Endothelial cell of umbilical vein (primary cell): ENCODE measurements at regions of chr5 and their contacts with region 1.

Region 1: DNA sequence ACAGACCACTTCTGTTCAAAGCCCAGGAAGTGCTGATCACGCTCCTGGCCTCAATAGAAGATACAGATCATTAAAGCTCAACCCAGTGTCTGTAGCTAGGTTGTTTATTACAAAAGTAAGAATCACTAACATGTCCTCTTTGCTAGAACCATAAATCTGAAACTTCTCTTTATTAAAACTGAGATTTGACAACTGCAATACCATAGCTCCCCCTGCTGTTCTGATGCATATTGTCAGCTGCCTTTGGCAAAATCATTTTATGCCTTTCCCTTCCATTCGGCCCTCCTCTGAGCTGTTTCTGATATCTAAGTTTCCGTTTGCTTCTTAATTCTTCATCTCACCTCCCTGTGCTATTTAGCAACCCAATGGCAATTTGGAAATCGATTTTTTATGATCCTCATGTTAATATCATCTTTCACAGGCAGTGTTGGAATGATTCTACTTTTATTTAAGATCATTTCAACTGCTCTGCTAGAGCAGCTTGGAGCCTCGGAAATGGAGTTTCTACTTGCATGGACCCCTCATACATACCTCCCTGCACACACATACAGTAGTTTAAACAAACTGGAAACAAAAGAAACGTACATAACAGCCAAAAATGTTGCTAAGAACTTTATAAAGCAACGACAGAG is 998.8 kb downstream of the MAT2B start:
- DNase-seq: peak; percentile 71
- H3K4me3 ChIP-seq: no peak overlapping the region
- H3K27ac ChIP-seq: no peak overlapping the region
- H3K4me1 ChIP-seq: peaks cover 2% of the 10 kb centered on the region
- H3K27me3 ChIP-seq: no peaks in the 10 kb centered on the region
- CTCF ChIP-seq: peak; percentile 65 to 68
- POLR2A ChIP-seq: no peak

Region 2: DNA sequence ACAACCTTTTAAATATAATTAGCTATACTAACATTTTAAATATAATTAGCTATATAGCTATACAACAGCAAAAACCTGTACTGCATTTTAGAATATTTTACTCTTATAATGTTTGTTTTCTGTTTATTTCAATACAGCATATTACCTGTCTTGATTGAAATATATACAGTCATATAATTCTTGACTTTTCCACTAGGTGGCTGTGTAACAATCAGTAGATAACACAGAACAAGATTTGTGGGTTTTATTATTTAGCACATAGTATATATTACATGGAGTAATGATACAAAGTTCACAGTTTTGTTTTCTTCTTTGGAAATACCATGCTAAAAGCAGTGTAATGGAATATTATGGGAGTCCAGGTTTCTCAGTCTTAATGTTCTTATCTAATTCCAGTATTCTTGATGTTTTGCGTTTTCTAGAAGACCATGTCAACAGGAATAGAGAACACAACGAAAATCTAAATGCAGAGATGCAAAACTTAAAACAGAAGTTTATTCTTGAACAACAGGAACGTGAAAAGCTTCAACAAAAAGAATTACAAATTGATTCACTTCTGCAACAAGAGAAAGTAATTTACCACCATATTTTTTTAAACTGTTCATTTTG is 1030.5 kb before region 1 on chr5:
- CTCF ChIA-PET with region 1: interaction called, 3 read pairs
- POLR2A ChIA-PET with region 1: no interaction called
- dilution Hi-C with region 1: no loop called
- intact Hi-C with region 1: loop called (anchors 10 kb)
- DNase-seq: peak; percentile 18
- H3K4me3 ChIP-seq: no peak overlapping the region
- H3K27ac ChIP-seq: no peak overlapping the region
- H3K4me1 ChIP-seq: peaks cover 7% of the 10 kb centered on the region
- H3K27me3 ChIP-seq: no peaks in the 10 kb centered on the region
- CTCF ChIP-seq: no peak
- POLR2A ChIP-seq: no peak

Region 3: DNA sequence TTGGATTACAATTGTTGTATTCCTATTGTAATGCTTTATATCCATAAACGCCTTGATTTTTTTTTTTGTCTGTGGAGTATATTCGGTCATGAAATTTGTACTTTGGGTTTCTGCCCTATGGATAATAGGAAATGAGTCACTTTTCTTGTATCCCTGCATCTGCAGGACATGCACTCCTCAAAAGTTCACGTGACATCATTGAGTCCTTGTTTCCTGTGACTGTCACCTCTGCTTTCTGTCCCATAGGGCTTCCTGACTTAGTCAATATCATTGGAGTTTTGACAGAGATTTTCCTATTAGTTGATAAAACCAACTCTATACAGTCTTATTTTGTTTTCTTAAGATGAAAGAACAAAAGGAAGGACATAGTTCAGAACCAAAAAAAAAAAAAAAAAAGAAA is 642.6 kb before region 1 on chr5:
- CTCF ChIA-PET with region 1: no interaction called
- POLR2A ChIA-PET with region 1: no interaction called
- dilution Hi-C with region 1: no loop called
- intact Hi-C with region 1: loop called (anchors 5 kb)
- DNase-seq: peak; percentile 91
- H3K4me3 ChIP-seq: no peak overlapping the region
- H3K27ac ChIP-seq: peak overlapping the region; percentile 84
- H3K4me1 ChIP-seq: peaks cover 41% of the 10 kb centered on the region
- H3K27me3 ChIP-seq: no peaks in the 10 kb centered on the region
- CTCF ChIP-seq: no peak
- POLR2A ChIP-seq: no peak

Region 4: DNA sequence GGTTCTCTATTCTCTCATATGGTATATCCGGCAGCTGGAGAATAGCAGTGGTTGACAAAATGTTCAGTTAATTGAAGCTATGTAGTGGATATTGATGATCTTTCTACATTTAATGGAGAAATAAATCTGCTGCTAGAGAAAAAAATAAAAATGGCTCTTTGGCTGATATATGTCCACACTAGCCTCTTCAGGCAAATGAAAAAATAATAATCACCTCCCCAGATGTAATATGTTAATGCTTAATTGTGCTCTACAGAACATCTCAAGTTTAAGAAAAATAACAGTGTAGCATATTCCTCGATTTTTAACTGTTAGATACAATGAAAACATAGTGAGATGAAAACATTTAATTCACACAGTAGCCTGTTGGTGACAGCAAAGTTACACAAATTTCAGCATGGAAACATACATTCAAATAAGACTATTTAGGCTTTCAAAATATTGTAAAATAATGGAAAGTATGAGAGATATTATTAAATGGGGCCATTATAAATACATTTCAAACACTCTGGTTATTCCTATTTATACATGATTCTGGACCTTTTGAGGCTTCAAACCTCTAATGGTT is 455.8 kb before region 1 on chr5:
- CTCF ChIA-PET with region 1: interaction called, 23 read pairs
- POLR2A ChIA-PET with region 1: no interaction called
- dilution Hi-C with region 1: no loop called
- intact Hi-C with region 1: loop called (anchors 1 kb)
- DNase-seq: peak; percentile 50
- H3K4me3 ChIP-seq: no peak overlapping the region
- H3K27ac ChIP-seq: no peak overlapping the region
- H3K4me1 ChIP-seq: no peaks in the 10 kb centered on the region
- H3K27me3 ChIP-seq: no peaks in the 10 kb centered on the region
- CTCF ChIP-seq: no peak
- POLR2A ChIP-seq: no peak

Region 5: DNA sequence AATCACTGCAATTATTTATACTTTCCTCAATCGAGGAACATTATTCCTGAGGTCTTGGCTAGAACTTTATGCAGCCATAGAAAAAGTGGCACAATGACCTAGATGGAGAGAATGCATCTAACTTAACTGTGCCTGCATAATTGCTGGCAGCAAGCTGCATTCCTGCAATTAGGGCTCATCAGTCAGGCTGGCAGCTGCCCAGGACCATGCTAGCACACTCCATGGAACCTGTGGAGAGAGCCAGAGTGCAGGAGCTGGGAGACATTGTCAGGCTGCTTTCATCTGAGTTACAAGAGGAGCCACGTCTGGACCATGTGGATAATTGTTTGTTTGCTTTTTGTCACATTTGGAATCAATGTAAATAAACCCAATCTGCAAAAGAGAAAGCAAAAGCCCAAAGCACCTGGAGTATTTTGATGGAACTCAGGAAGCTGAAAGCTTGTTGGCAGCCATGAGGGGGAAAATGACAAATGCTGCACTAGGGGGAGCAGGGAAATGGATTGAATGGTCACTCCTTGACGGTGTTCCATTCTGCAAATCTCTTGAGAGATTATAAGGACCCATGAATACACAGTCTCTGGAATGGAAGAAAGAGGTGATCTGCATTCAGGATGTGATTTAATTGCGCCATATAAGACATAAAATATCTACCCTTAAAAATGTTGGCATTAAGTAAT is 158.9 kb before region 1 on chr5:
- CTCF ChIA-PET with region 1: no interaction called
- POLR2A ChIA-PET with region 1: no interaction called
- dilution Hi-C with region 1: no loop called
- intact Hi-C with region 1: no loop called
- DNase-seq: peak; percentile 12
- H3K4me3 ChIP-seq: no peak overlapping the region
- H3K27ac ChIP-seq: no peak overlapping the region
- H3K4me1 ChIP-seq: no peaks in the 10 kb centered on the region
- H3K27me3 ChIP-seq: no peaks in the 10 kb centered on the region
- CTCF ChIP-seq: no peak
- POLR2A ChIP-seq: no peak

Region 6: DNA sequence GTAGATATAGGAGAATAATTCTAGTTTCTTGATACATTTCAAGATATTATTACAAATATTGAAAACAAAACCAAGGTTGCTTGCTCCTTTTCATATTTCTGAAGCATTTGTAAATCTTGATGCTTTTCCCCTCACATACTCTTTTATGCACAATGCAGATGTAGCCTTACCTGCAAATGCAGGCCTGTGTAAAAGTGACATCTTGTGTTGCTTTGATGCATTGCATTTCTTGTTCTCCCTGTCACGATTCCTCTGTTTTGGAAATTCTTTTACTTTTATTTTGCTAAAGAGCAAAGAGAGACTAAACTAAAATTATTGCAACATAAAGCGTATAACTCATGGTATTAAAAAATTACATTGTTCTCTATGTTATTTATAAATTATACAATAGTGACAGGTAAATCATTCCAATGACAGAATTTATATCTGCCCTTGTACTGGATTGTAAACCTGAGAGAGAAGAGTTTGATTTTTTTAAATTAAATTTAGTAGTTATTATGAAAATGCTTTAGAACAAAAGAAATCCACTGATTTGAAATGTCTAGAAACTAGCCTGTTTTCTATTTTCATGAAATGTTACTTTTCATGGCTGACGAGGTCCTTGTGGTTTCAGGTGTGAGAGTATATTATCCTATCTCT is 28.8 kb before region 1 on chr5:
- CTCF ChIA-PET with region 1: interaction called, 11 read pairs
- POLR2A ChIA-PET with region 1: no interaction called
- dilution Hi-C with region 1: no loop called
- intact Hi-C with region 1: no loop called
- DNase-seq: peak; percentile 47
- H3K4me3 ChIP-seq: no peak overlapping the region
- H3K27ac ChIP-seq: no peak overlapping the region
- H3K4me1 ChIP-seq: no peaks in the 10 kb centered on the region
- H3K27me3 ChIP-seq: no peaks in the 10 kb centered on the region
- CTCF ChIP-seq: peak in 1 of 2 donors; percentile 45
- POLR2A ChIP-seq: no peak

Region 7: DNA sequence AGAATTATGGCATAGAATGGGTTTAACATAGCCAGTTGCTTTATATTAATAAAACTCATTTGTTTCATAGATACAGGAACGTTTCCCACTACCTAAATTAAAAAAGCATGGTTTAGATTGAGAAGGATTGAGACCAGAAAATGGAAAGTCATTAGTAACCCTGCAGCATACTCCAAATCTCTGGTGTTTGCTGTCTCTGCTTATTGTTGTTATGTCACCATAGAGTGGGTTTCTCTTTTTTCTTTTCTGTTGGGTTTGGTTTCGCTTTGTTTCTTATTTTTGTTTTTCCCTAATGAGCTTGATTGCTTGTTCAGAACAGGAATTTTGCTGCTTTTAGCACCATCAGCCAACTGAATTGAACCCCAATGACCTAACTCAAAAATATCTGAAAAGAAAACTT is 35.9 kb after region 1 on chr5:
- CTCF ChIA-PET with region 1: no interaction called
- POLR2A ChIA-PET with region 1: no interaction called
- dilution Hi-C with region 1: no loop called
- intact Hi-C with region 1: no loop called
- DNase-seq: no peak
- H3K4me3 ChIP-seq: no peak overlapping the region
- H3K27ac ChIP-seq: no peak overlapping the region
- H3K4me1 ChIP-seq: no peaks in the 10 kb centered on the region
- H3K27me3 ChIP-seq: no peaks in the 10 kb centered on the region
- CTCF ChIP-seq: no peak
- POLR2A ChIP-seq: no peak